Stomach (tissue), 19 donors: ENCODE measurements at regions of chr11 and their contacts with region 1.

Region 1: DNA sequence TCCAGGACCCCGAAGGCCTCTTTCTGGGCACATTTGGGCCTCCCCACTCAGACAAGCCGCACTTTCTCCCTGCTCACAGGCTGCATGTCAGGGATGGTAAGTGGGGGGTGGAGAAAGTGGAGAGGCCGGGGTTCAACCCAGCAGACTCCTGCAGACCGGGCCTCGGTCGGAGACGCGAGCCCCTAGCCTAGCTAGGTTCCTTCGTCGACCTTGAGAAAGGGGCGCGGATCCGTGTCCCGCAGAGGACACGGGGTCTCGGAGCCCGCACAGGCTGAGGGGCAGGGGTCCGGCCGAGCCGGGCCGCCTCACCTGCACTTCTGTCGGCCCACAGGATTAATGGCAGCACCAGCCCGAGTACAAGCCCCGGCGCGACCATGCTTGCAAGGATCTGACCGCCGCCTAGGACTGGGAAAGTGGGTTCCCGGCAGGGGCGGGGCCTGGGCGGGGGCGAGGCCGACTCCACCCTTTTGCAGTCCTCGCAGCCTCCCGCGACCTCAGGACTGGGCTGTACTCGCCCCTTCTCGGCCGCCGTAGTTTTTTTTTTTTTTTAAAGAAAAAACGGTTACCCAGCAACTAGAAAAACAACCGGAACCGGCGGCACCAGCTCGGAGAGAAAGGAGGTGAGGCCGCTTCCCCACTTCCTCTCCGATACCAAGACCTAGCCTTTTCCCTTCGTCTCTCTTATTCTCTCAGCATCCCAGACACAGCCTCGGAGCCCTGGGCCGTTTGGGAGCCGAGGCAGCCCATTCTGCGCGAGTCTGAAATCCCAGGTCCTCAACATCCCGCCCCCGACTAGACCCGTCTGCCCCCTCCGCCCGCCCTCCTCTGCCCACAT is at the starts of genes SIAE and SPA17:
- DNase-seq: peak; percentile 93 to 97
- H3K4me3 ChIP-seq: peak within 1 kb of the TSS; percentile 69 to 75 (median 71)
- H3K27ac ChIP-seq: peak within 1 kb of the TSS; percentile 82 to 91 (median 88)
- H3K4me1 ChIP-seq: peaks cover 10 to 20% (median 19%) of the 10 kb centered on the region in 4 donors
- H3K27me3 ChIP-seq: no peaks in the 10 kb centered on the region
- CTCF ChIP-seq: no peak
- EP300 ChIP-seq: no peak
- POLR2A ChIP-seq: no peak
- total RNA-seq, gene SIAE: 1.2 to 22.6 (median 11.0) TPM
- total RNA-seq, gene SPA17: 1.8 to 26.8 (median 4.0) TPM in 3 of 5 donors, not detected in the others

Region 2: GRCh38 chr11:124644426-124645280 is 28.9 kb before region 1 on chr11:
- intact Hi-C with region 1: no loop called
- DNase-seq: peak; percentile 57 to 87
- H3K4me3 ChIP-seq: peak overlapping the region in 3 of 4 donors; percentile 19 to 22 (median 20)
- H3K27ac ChIP-seq: no peak overlapping the region
- H3K4me1 ChIP-seq: peaks cover 0 to 8% (median 6%) of the 10 kb centered on the region in 4 donors
- H3K27me3 ChIP-seq: no peaks in the 10 kb centered on the region
- CTCF ChIP-seq: peak in 5 of 7 experiments; percentile 55 to 82 (median 73)
- EP300 ChIP-seq: no peak
- POLR2A ChIP-seq: no peak

Region 3: DNA sequence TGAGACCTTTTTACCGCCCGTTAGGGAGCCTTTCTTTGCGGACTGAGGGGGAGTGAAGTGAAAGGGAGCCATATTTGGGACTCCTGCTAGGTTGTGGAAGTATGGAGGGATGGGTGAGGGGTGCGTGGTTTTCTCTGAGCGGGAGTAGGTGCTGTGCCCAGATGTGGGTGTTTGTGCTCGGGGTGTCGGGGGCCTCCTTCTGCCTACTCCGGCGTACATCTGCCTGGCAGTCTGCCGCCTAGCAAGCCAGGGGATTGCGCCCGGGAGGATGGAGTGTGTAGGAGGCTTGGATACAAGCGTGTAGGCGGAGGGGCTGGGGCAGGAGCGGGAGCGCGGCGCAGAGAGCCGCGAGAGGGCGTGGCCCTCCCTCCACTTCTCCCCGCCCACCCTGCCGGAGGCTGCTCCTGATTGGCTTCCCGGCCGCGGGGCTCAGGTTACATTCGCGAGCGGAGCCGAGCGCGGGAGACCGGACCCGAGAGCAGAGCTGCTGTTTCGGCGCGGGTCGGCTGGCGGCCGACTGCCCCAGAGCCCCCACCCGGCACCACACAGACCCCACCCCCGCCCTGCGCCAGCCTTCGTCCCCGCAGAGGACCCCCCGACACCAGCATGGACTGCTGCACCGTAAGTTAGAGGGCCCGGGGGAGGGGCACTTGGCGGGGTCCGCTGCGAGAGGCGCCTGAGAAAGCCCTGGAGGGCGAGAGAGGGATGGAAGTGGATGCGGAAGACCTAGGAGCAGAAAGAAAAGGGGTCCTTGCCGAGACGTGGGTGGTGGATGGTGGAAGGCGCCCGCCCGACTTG is 66.1 kb after region 1 on chr11 and contains the start of gene NRGN:
- intact Hi-C with region 1: loop called (anchors 10 kb)
- DNase-seq: peak; percentile 94 to 97
- H3K4me3 ChIP-seq: peak within 1 kb of the TSS; percentile 48 to 70 (median 56)
- H3K27ac ChIP-seq: peak within 1 kb of the TSS in 4 of 5 donors; percentile 12 to 54 (median 40)
- H3K4me1 ChIP-seq: peaks cover 17 to 26% (median 19%) of the 10 kb centered on the region in 4 donors
- H3K27me3 ChIP-seq: peaks cover 0 to 65% (median 15%) of the 10 kb centered on the region in 3 donors
- CTCF ChIP-seq: no peak
- EP300 ChIP-seq: no peak
- POLR2A ChIP-seq: no peak
- total RNA-seq, gene NRGN: 0.37 to 0.87 TPM in 2 of 5 donors, not detected in the others

Region 4: GRCh38 chr11:124763156-124763947 is 89.8 kb after region 1 on chr11:
- intact Hi-C with region 1: loop called (anchors 5 kb)
- DNase-seq: peak; percentile 92 to 95
- H3K4me3 ChIP-seq: peak overlapping the region; percentile 40 to 78 (median 57)
- H3K27ac ChIP-seq: peak overlapping the region; percentile 77 to 85 (median 81)
- H3K4me1 ChIP-seq: peaks cover 37 to 56% (median 54%) of the 10 kb centered on the region in 4 donors
- H3K27me3 ChIP-seq: peaks cover 4 to 47% (median 42%) of the 10 kb centered on the region in 3 donors
- CTCF ChIP-seq: peak in 5 of 7 experiments; percentile 53 to 87 (median 75)
- EP300 ChIP-seq: no peak
- POLR2A ChIP-seq: no peak

Region 5: GRCh38 chr11:124837491-124837856 is 163.9 kb after region 1 on chr11:
- intact Hi-C with region 1: loop called (anchors 5 kb)
- DNase-seq: peak in 1 of 2 donors; percentile 80
- H3K4me3 ChIP-seq: no peak overlapping the region
- H3K27ac ChIP-seq: no peak overlapping the region
- H3K4me1 ChIP-seq: peaks cover 10 to 38% (median 30%) of the 10 kb centered on the region in 4 donors
- H3K27me3 ChIP-seq: peaks cover 11 to 59% (median 44%) of the 10 kb centered on the region in 3 donors
- CTCF ChIP-seq: no peak
- EP300 ChIP-seq: no peak
- POLR2A ChIP-seq: no peak